IMR-90 (cell line): ENCODE measurements at regions of chr7 and their contacts with region 1.

Region 1: GRCh38 chr7:92313055-92313454 is 67.3 kb downstream of the ANKIB1 start:
- DNase-seq: no peak
- ATAC-seq: no peak
- H3K4me3 ChIP-seq: no peak overlapping the region
- H3K27ac ChIP-seq: no peak overlapping the region
- H3K4me1 ChIP-seq: peaks cover 3% of the 10 kb centered on the region
- H3K27me3 ChIP-seq: no peaks in the 10 kb centered on the region
- CTCF ChIP-seq: no peak
- POLR2A ChIP-seq: no peak
- RAD21 ChIP-seq: no peak

Region 2: DNA sequence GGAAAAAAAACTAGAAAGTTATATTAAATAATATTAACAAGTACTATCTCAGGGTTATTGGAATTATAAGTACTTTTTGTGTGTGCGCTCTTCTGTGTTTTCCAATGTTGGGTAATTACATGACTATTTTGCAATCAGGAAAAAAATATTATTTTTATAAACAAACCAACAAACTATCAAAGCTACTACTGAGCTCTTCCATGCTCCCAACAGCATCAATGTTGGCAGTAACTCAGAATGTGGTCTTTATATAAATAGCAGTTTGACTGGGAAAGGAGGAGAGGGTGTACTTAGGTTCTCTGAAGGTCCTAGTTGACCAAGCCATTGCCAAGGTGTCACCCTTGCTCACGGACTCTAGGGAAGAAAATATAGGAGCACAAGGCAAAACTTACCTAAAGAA is 447.5 kb before region 1 on chr7:
- CTCF ChIA-PET with region 1: no interaction called
- POLR2A ChIA-PET with region 1: no interaction called
- dilution Hi-C with region 1: no loop called
- in situ Hi-C with region 1: no loop called
- intact Hi-C with region 1: no loop called
- DNase-seq: no peak
- ATAC-seq: no peak
- H3K4me3 ChIP-seq: no peak overlapping the region
- H3K27ac ChIP-seq: no peak overlapping the region
- H3K4me1 ChIP-seq: no peaks in the 10 kb centered on the region
- H3K27me3 ChIP-seq: no peaks in the 10 kb centered on the region
- CTCF ChIP-seq: no peak
- POLR2A ChIP-seq: no peak
- RAD21 ChIP-seq: no peak

Region 3: DNA sequence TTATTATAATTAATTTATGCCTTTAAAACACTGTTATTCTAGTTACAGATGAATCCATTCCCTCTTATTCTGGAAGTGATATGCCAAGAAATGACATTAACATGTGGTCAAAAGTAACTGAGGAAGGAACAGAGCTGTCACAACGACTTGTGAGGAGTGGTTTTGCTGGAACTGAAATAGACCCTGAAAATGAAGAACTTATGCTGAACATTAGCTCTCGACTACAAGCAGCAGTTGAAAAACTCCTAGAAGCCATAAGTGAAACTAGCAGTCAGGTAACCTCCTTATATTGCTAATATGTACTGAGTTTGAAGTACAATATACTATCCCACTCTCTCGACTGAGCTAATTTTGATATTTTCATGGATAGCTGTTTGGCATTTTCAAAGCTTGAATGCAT is 260.4 kb before region 1 on chr7:
- CTCF ChIA-PET with region 1: no interaction called
- POLR2A ChIA-PET with region 1: no interaction called
- dilution Hi-C with region 1: no loop called
- in situ Hi-C with region 1: no loop called
- intact Hi-C with region 1: no loop called
- DNase-seq: no peak
- ATAC-seq: no peak
- H3K4me3 ChIP-seq: no peak overlapping the region
- H3K27ac ChIP-seq: no peak overlapping the region
- H3K4me1 ChIP-seq: no peaks in the 10 kb centered on the region
- H3K27me3 ChIP-seq: no peaks in the 10 kb centered on the region
- CTCF ChIP-seq: no peak
- POLR2A ChIP-seq: no peak
- RAD21 ChIP-seq: no peak

Region 4: DNA sequence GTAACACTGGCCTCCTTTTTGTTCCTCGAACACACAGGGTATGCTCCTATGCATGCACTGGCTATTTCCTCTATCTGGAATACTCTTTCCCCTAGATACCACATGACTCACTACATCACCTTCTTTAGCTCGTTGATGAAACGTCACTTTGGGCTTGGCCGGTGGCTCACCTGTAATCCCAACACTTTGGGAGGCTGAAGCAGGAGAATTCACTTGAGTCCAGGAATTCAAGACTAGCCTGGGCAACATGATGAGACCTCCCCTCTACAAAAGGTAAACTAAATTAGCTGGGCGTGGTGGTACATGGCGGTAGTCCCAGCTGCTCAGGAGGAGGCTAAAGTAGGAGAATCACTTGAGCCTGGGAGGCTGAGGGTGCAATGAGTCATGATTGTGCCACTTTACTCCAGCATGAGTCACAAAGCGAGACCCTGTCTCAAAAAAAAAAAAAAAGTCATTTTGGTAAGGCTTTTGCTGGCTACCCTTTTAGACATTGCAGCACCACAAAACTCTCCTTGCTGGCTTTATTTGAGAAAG is 52.7 kb before region 1 on chr7:
- CTCF ChIA-PET with region 1: no interaction called
- POLR2A ChIA-PET with region 1: no interaction called
- dilution Hi-C with region 1: no loop called
- in situ Hi-C with region 1: no loop called
- intact Hi-C with region 1: loop called (anchors 5 kb)
- DNase-seq: peak; percentile 29
- ATAC-seq: no peak
- H3K4me3 ChIP-seq: no peak overlapping the region
- H3K27ac ChIP-seq: no peak overlapping the region
- H3K4me1 ChIP-seq: no peaks in the 10 kb centered on the region; the same call in 1 of the 2 replicates
- H3K27me3 ChIP-seq: no peaks in the 10 kb centered on the region
- CTCF ChIP-seq: no peak
- POLR2A ChIP-seq: no peak
- RAD21 ChIP-seq: no peak